Tibial artery (tissue), 4 donors: ENCODE measurements at regions of chr9 and their contacts with region 1.

Region 1: GRCh38 chr9:36487482-36488388 is 85.0 kb upstream of the MELK start:
- DNase-seq: peak; percentile 87 to 96
- H3K4me3 ChIP-seq: peak overlapping the region; percentile 98
- H3K27ac ChIP-seq: peak overlapping the region; percentile 91 to 92
- H3K4me1 ChIP-seq: peaks cover 0 to 26% (median 18%) of the 10 kb centered on the region in 4 donors
- H3K27me3 ChIP-seq: no peaks in the 10 kb centered on the region
- CTCF ChIP-seq: peak in 1 of 2 experiments; percentile 24

Region 2: GRCh38 chr9:36298586-36298985 is 189.1 kb before region 1 on chr9:
- intact Hi-C with region 1: no loop called
- DNase-seq: no peak
- H3K4me3 ChIP-seq: no peak overlapping the region
- H3K27ac ChIP-seq: no peak overlapping the region
- H3K4me1 ChIP-seq: no peaks in the 10 kb centered on the region
- H3K27me3 ChIP-seq: no peaks in the 10 kb centered on the region
- CTCF ChIP-seq: no peak

Region 3: DNA sequence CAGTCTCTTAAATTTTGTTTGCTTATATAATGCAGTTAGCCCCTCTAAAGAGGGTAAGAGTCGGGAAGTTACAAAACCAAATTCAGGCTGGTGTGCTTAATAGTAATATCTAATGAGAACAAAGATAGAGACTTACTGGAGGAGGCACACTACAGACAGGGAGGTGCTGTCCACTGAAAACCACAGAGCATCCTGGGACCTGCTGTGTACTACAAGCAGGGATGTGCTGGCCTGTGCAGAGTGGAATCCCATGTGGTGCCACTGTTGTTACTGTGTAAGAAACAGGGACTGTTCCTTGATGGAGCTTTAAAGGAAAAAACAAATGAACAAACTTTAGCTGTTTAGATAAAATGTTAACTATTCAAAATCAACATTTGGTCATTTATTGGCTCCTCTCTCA is 130.1 kb before region 1 on chr9:
- intact Hi-C with region 1: no loop called
- DNase-seq: no peak
- H3K4me3 ChIP-seq: no peak overlapping the region
- H3K27ac ChIP-seq: no peak overlapping the region
- H3K4me1 ChIP-seq: no peaks in the 10 kb centered on the region
- H3K27me3 ChIP-seq: no peaks in the 10 kb centered on the region
- CTCF ChIP-seq: no peak

Region 4: GRCh38 chr9:36400332-36401163 is 87.2 kb before region 1 on chr9:
- intact Hi-C with region 1: loop called (anchors 5 kb)
- DNase-seq: peak; percentile 82 to 92
- H3K4me3 ChIP-seq: peak overlapping the region; percentile 71 to 73
- H3K27ac ChIP-seq: peak overlapping the region; percentile 85 to 86
- H3K4me1 ChIP-seq: peaks cover 0 to 25% (median 13%) of the 10 kb centered on the region in 4 donors
- H3K27me3 ChIP-seq: no peaks in the 10 kb centered on the region
- CTCF ChIP-seq: no peak

Region 5: DNA sequence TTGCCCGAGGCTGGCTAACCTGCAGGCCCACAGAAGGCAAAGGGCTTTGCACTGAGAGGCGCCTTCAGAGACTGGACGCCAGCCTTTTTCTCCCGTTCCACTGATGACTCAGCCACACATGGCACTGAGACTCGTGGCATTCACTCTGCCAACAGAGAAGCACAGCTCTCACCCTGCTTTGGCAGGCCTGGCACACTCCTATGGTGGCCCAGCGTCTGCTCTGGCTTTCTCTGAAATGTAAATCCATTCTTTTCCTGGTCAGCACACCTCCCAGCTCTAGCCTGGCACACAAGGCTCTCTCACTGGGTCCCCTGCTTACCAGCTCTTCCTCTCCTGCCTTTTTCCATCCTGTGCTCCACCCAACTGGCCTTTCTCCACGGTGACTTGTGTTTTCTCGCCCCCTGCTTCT is 79.1 kb after region 1 on chr9:
- intact Hi-C with region 1: loop called (anchors 10 kb)
- DNase-seq: peak; percentile 66 to 92
- H3K4me3 ChIP-seq: no peak overlapping the region
- H3K27ac ChIP-seq: peak overlapping the region; percentile 83 to 90
- H3K4me1 ChIP-seq: peaks cover 0 to 16% (median 9%) of the 10 kb centered on the region in 4 donors
- H3K27me3 ChIP-seq: no peaks in the 10 kb centered on the region
- CTCF ChIP-seq: no peak